ENCODE measurements at regions of chr4 and their contacts with region 1.

Region 1: GRCh38 chr4:112170451-112170993 is 25.3 kb downstream of the FAM241A start:
- DNase-seq: peak; percentile 38
- H3K4me3 ChIP-seq: peak overlapping the region; percentile 39
- H3K27ac ChIP-seq: peak overlapping the region; percentile 39
- H3K4me1 ChIP-seq: peaks cover 65% of the 10 kb centered on the region
- CTCF ChIP-seq: no peak

Region 2: DNA sequence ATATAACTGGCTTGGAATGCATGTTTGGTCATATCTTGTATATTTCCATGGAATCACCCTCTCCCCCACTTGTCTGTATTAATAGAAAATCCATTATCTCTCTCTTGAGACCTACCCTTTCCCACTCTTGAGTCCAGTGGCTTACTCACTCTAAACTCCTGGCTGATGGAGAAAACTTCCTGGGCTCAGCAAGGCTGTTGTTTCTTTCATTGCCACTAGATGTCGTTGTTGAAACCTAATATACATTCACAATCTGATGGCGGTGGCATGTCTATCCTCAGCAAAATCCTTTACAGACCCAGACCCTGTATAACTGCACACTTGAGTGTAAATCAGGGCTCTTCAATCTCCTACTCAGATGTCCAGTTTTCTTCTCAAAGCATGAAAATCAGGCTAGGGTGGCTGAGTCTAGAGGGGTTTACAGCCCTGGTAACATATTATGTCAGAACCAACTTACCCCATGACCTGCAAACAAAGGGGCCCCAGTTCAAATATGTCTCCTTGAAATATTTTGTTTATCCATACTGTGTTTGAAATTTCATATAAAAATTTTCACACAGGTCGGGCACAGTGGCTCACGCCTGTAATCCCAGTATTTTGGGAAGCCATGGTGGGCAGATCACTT is 95.3 kb before region 1 on chr4:
- CTCF ChIA-PET with region 1: no interaction called
- POLR2A ChIA-PET with region 1: no interaction called
- intact Hi-C with region 1: no loop called
- DNase-seq: peak; percentile 68
- H3K4me3 ChIP-seq: no peak overlapping the region
- H3K27ac ChIP-seq: no peak overlapping the region
- H3K4me1 ChIP-seq: no peaks in the 10 kb centered on the region
- CTCF ChIP-seq: peak; percentile 96

Region 3: GRCh38 chr4:112153211-112153791 is 17.2 kb before region 1 on chr4:
- CTCF ChIA-PET with region 1: interaction called, 3 read pairs
- POLR2A ChIA-PET with region 1: interaction called, 37 read pairs
- intact Hi-C with region 1: loop called (anchors 2 kb)
- DNase-seq: no peak
- H3K4me3 ChIP-seq: peak overlapping the region; percentile 21
- H3K27ac ChIP-seq: no peak overlapping the region
- H3K4me1 ChIP-seq: peaks cover 44% of the 10 kb centered on the region
- CTCF ChIP-seq: no peak

Region 4: GRCh38 chr4:112279025-112279881 is 108.7 kb after region 1 on chr4:
- CTCF ChIA-PET with region 1: no interaction called
- POLR2A ChIA-PET with region 1: interaction called, 10 read pairs
- intact Hi-C with region 1: loop called (anchors 5 kb)
- DNase-seq: peak; percentile 63
- H3K4me3 ChIP-seq: peak overlapping the region; percentile 67
- H3K27ac ChIP-seq: peak overlapping the region; percentile 75
- H3K4me1 ChIP-seq: peaks cover 58% of the 10 kb centered on the region
- CTCF ChIP-seq: no peak

Measured in OCI-LY7 (cell line).